ENCODE measurements at regions of chr5 and their contacts with region 1.

Region 1: DNA sequence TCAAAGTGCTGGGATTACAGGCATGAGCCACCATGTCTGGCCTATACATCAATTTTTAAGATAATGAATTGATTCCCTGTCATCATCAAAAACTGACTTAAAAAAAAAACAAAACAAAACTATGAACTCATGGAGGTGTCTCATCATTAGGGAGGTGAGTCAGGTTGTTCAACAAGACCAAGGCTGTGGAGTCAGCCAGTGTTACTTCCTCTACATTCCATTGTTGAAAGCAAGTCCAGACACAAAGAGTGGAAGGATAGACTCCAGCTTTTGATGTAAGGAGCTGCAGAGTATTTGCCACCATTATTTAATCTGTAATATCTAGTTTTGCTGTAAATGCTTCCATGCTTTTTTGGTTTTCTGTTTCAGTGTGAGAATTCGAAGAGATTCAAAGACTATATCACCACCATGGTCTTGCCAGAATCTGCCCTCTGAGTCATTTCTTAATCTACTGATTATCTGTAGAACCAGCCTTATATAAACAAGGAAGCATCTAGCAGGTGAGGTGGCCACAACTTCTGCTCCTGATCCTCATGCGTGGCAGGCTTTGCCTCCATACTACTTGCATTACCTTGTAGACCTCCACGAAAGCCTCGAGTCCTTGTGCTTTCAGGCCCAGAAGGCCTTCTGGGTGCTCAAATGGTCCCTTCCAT is 156.1 kb downstream of the FGF1 start:
- DNase-seq: peak; percentile 46 to 95
- H3K4me3 ChIP-seq: no peak overlapping the region
- H3K27ac ChIP-seq: peak overlapping the region; percentile 83
- H3K4me1 ChIP-seq: peaks cover 44% of the 10 kb centered on the region
- H3K27me3 ChIP-seq: no peaks in the 10 kb centered on the region
- CTCF ChIP-seq: no peak

Region 2: DNA sequence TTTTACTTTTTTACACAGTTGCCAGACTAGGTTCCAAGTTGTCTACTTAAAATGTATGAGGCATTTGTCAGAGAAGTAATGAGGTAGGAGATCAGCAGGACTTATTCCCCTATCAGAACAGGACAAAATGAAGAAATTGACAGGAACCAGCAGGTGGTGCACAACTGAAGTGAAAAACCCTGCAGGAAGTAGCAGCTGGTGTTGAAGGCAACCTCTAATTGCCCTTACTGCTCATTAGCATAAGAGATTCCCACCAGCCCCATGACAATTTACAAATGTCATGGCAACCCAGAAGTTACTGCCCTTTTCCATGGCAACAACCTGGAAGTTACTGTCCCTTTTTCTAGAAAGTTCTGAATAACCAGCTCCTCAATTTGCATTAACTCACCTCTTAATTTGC is 1279.2 kb before region 1 on chr5:
- CTCF ChIA-PET with region 1: no interaction called
- POLR2A ChIA-PET with region 1: no interaction called
- intact Hi-C with region 1: no loop called
- DNase-seq: no peak
- H3K4me3 ChIP-seq: no peak overlapping the region
- H3K27ac ChIP-seq: no peak overlapping the region
- H3K4me1 ChIP-seq: no peaks in the 10 kb centered on the region
- H3K27me3 ChIP-seq: no peaks in the 10 kb centered on the region
- CTCF ChIP-seq: no peak

Region 3: GRCh38 chr5:142356716-142357473 is 172.9 kb before region 1 on chr5:
- CTCF ChIA-PET with region 1: no interaction called
- POLR2A ChIA-PET with region 1: no interaction called
- intact Hi-C with region 1: loop called (anchors 1 kb)
- DNase-seq: peak; percentile 81 to 87
- H3K4me3 ChIP-seq: peak overlapping the region; percentile 65; the same call in 1 of the 2 replicates
- H3K27ac ChIP-seq: peak overlapping the region; percentile 93
- H3K4me1 ChIP-seq: peaks cover 68% of the 10 kb centered on the region
- H3K27me3 ChIP-seq: no peaks in the 10 kb centered on the region
- CTCF ChIP-seq: no peak

Region 4: GRCh38 chr5:142512043-142513042 is 17.4 kb before region 1 on chr5:
- CTCF ChIA-PET with region 1: no interaction called
- POLR2A ChIA-PET with region 1: no interaction called
- intact Hi-C with region 1: loop called (anchors 2 kb)
- DNase-seq: peak; percentile 82 to 97
- H3K4me3 ChIP-seq: no peak overlapping the region
- H3K27ac ChIP-seq: peak overlapping the region; percentile 77
- H3K4me1 ChIP-seq: peaks cover 51% of the 10 kb centered on the region
- H3K27me3 ChIP-seq: no peaks in the 10 kb centered on the region
- CTCF ChIP-seq: no peak

Region 5: DNA sequence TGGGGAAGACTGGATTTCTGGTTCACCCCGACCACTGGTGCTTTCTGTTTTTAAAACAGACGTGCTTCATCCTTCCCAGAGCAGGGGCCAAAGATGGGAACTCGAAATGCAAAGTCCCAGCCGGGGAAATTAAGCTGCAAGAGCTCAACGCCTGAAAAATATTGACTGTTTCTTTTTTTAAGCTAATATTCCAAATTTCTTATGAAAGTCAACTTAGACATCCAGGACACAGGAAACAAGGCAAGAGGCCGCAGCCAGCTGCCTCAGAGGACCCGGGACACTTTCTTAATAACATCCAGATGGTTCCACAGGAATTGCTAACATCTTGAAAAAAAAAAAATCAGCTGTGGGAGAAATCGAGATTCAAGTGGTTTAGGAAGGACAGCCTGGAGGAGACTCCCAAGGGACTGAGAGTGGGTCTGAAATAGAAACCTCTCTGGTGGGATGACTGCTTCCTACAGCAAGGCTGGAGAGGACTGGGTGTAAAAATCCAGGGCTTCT is 11.2 kb after region 1 on chr5:
- CTCF ChIA-PET with region 1: no interaction called
- POLR2A ChIA-PET with region 1: interaction called, 12 read pairs
- intact Hi-C with region 1: no loop called
- DNase-seq: no peak
- H3K4me3 ChIP-seq: no peak overlapping the region
- H3K27ac ChIP-seq: no peak overlapping the region
- H3K4me1 ChIP-seq: 0 out of 2 replicates have a peak, but pooled peaks cover 9% of the 10 kb centered on the region
- H3K27me3 ChIP-seq: no peaks in the 10 kb centered on the region
- CTCF ChIP-seq: no peak